Right cardiac atrium (tissue), 5 donors: ENCODE measurements at regions of chr11 and their contacts with region 1.

Region 1: GRCh38 chr11:355581-356458 is 13.5 kb upstream of the B4GALNT4 start:
- DNase-seq: peak; percentile 98
- ATAC-seq: peak; percentile 91 to 93
- H3K4me3 ChIP-seq: peak overlapping the region; percentile 18
- H3K27ac ChIP-seq: peak overlapping the region; percentile 98
- H3K4me1 ChIP-seq: peaks cover 3% of the 10 kb centered on the region
- H3K27me3 ChIP-seq: no peaks in the 10 kb centered on the region

Region 2: GRCh38 chr11:241634-242033 is 114.2 kb before region 1 on chr11:
- intact Hi-C with region 1: no loop called
- DNase-seq: no peak
- ATAC-seq: peak in 1 of 2 donors; percentile 42
- H3K4me3 ChIP-seq: no peak overlapping the region
- H3K27ac ChIP-seq: peak overlapping the region; percentile 95
- H3K4me1 ChIP-seq: no peaks in the 10 kb centered on the region
- H3K27me3 ChIP-seq: no peaks in the 10 kb centered on the region

Region 3: GRCh38 chr11:304915-305843 is 50.6 kb before region 1 on chr11:
- intact Hi-C with region 1: loop called in 3 of 4 experiments (anchors 5 to 10 kb)
- DNase-seq: peak; percentile 72 to 90 (median 83)
- ATAC-seq: no peak
- H3K4me3 ChIP-seq: no peak overlapping the region
- H3K27ac ChIP-seq: no peak overlapping the region
- H3K4me1 ChIP-seq: peaks cover 2% of the 10 kb centered on the region
- H3K27me3 ChIP-seq: no peaks in the 10 kb centered on the region

Region 4: GRCh38 chr11:534396-535209 is 178.8 kb after region 1 on chr11:
- intact Hi-C with region 1: no loop called
- DNase-seq: peak in 2 of 3 donors; percentile 70 to 75
- ATAC-seq: no peak
- H3K4me3 ChIP-seq: peak overlapping the region; percentile 79
- H3K27ac ChIP-seq: no peak overlapping the region
- H3K4me1 ChIP-seq: no peaks in the 10 kb centered on the region
- H3K27me3 ChIP-seq: no peaks in the 10 kb centered on the region